Left ventricle myocardium superior (tissue), 1 donor: ENCODE measurements at regions of chr19 and their contacts with region 1.

Region 1: DNA sequence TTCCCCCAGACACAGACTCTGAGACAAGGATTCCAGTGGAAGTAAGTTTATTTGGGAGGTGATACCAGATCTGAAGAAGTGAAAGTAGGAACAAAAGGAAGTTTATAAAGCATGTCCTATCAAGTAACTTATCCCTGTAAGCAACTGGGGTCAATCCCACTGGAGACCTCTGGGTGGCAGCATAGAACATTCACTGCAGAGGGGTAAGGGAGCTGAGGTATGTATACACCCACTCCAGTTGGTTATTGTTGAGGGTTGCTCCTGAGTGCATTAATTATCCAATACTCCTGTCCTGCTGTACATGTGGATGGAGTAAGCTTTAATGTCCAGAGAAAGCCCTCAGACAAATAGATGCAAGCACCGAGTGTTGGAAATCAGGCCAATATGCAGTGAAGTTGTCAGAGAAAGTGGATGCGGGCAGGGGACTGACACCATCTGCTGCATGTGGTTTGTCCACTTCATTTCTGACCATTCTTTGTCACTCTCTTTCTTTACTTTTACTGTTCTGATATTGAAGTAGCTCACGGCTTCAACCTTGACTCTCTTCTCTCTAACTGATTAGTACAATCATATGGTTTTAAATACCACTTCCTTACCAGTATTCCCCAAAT is 46.7 kb downstream of the NOTCH3 start:
- DNase-seq: no peak
- ATAC-seq: no peak

Region 2: DNA sequence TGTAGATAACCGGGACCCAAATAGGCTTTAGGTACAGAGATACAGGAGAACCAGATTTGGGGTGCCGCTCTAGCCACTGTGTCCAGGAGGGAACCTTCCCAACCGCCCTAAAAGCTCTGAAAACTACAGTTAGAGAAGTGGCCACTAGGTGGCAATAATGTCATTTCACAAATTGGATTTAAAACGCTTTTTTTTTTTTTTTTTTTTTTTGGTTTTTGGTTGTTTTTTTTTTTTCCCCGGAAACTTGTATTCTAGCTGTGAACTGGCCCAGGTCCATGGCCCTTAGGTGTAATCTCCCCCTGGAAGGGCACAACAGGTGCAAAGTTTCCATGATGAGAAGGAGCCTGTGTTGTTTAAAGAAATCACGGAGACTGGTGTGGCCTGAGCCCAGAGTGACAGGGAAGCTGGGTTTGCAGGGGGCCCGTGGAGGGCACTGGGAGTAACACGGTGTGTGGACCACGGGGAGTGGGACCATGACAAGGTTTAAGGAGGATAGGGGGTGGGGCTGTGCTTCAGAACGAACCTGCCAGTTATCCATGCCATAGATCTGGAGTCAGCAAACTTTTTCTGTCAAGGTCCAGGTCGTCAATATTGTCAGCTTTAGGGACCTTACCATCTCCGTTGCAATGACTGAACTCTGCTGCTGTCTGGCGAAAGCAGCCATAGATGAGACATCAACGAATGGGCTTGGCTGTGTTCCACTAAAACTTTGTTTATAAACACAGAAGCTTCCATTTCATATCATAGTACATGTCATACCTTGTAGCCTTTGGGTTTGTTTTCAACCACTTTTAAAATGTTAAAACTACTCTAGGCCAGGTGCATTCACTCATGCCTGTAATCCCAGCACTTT is 62.0 kb before region 1 on chr19:
- intact Hi-C with region 1: loop called (anchors 10 kb)
- DNase-seq: no peak
- ATAC-seq: peak; percentile 50

Region 3: GRCh38 chr19:15555759-15556633 is 401.9 kb after region 1 on chr19:
- intact Hi-C with region 1: loop called (anchors 10 kb)
- DNase-seq: peak; percentile 91
- ATAC-seq: peak; percentile 95